ENCODE measurements at regions of chr11 and their contacts with region 1.

Region 1: GRCh38 chr11:62841361-62842184 is 2.2 kb upstream of the WDR74 start:
- DNase-seq: peak; percentile 92
- CTCF ChIP-seq: no peak

Region 2: GRCh38 chr11:62753736-62754603 is 87.6 kb before region 1 on chr11 and contains the start of gene ZBTB3:
- CTCF ChIA-PET with region 1: no interaction called
- POLR2A ChIA-PET with region 1: interaction called, 27 read pairs
- DNase-seq: peak; percentile 96
- CTCF ChIP-seq: no peak

Region 3: GRCh38 chr11:62799486-62799885 is 42.1 kb before region 1 on chr11:
- CTCF ChIA-PET with region 1: no interaction called
- POLR2A ChIA-PET with region 1: interaction called, 20 read pairs
- DNase-seq: no peak
- CTCF ChIP-seq: no peak

Region 4: GRCh38 chr11:62855571-62856332 is 14.2 kb after region 1 on chr11:
- CTCF ChIA-PET with region 1: interaction called, 16 read pairs
- POLR2A ChIA-PET with region 1: interaction called, 236 read pairs
- DNase-seq: peak; percentile 96
- CTCF ChIP-seq: no peak

Region 5: GRCh38 chr11:62880803-62881578 is 39.4 kb after region 1 on chr11 and contains the start of gene SLC3A2:
- CTCF ChIA-PET with region 1: no interaction called
- POLR2A ChIA-PET with region 1: interaction called, 13 read pairs
- DNase-seq: peak; percentile 91
- CTCF ChIP-seq: peak; percentile 80